Right lobe of liver (tissue), 6 donors: ENCODE measurements at regions of chr3 and their contacts with region 1.

Region 1: GRCh38 chr3:87082796-87083440 is 92.0 kb upstream of the VGLL3 start:
- DNase-seq: no peak
- ATAC-seq: peak; percentile 80 to 85 (median 83)
- H3K4me3 ChIP-seq: no peak overlapping the region
- H3K27ac ChIP-seq: no peak overlapping the region
- H3K4me1 ChIP-seq: no peaks in the 10 kb centered on the region
- H3K27me3 ChIP-seq: no peaks in the 10 kb centered on the region
- CTCF ChIP-seq: peak; percentile 31 to 58 (median 56)
- POLR2A ChIP-seq: no peak

Region 2: DNA sequence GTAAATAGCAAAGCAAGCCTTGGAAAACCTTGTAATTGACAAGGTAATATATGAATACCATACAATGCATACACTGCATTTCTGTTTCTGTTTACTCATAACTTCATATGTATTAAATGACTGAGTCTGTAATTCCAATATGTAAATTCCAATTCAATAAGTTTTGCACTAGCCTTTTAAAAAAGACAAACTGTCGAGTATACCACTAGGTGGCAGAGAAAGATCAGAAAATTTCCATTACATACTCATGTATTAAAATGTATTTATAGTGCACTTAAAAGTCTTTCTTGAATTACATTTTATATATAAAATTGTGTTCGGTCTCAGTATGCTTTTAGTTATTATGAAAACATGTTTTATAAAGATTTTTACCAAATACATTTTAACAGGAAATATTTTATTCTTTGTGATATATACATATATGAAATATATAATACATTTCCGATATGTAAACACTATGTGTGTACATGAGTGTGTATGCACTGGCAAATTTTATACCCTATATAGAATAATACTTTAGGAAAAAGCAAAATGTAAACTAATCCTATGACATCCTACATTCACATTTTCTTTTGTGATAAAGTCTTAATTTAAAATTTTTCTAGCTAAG is 308.7 kb before region 1 on chr3:
- intact Hi-C with region 1: loop called (anchors 10 kb)
- DNase-seq: no peak
- ATAC-seq: peak in 2 of 4 donors; percentile 44 to 45
- H3K4me3 ChIP-seq: no peak overlapping the region
- H3K27ac ChIP-seq: no peak overlapping the region
- H3K4me1 ChIP-seq: no peaks in the 10 kb centered on the region
- H3K27me3 ChIP-seq: peaks cover 0 to 4% of the 10 kb centered on the region in 2 donors
- CTCF ChIP-seq: peak; percentile 35 to 50 (median 43)
- POLR2A ChIP-seq: no peak

Region 3: DNA sequence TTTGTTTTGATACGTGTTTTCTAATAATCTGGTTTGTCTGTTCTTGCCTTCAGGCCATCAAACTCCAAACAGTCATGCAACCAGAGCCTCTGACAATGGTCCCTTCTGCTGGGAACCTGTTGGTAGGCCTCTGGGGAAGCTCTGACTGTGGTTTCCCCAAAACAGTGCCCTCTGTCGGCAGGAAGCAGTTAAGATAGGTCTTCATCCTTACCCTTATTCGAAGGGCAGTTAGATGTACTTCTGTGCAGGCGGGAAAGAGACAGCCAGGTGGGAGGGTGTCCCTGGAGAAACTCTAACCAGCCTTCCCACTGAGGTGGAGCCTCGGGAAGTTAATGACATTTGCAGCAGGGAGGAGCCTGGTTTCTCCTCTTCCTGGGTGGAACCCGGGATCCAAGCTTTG is 62.6 kb after region 1 on chr3:
- intact Hi-C with region 1: no loop called
- DNase-seq: no peak
- ATAC-seq: peak in 1 of 4 donors; percentile 30
- H3K4me3 ChIP-seq: no peak overlapping the region
- H3K27ac ChIP-seq: no peak overlapping the region
- H3K4me1 ChIP-seq: peaks cover 0 to 17% (median 7%) of the 10 kb centered on the region in 4 donors
- H3K27me3 ChIP-seq: no peaks in the 10 kb centered on the region
- CTCF ChIP-seq: peak in 1 of 4 donors; percentile 16
- POLR2A ChIP-seq: no peak